MCF 10A (cell line): ENCODE measurements at regions of chr7 and their contacts with region 1.

Region 1: GRCh38 chr7:151759591-151760042 is 117.3 kb downstream of the PRKAG2 start:
- DNase-seq: peak; percentile 78
- H3K4me3 Mint-ChIP-seq: no peak overlapping the region
- H3K27ac Mint-ChIP-seq: no peak overlapping the region
- H3K4me1 Mint-ChIP-seq: peaks cover 21% of the 10 kb centered on the region
- H3K27me3 Mint-ChIP-seq: no peaks in the 10 kb centered on the region
- CTCF ChIP-seq: peak; percentile 83

Region 2: DNA sequence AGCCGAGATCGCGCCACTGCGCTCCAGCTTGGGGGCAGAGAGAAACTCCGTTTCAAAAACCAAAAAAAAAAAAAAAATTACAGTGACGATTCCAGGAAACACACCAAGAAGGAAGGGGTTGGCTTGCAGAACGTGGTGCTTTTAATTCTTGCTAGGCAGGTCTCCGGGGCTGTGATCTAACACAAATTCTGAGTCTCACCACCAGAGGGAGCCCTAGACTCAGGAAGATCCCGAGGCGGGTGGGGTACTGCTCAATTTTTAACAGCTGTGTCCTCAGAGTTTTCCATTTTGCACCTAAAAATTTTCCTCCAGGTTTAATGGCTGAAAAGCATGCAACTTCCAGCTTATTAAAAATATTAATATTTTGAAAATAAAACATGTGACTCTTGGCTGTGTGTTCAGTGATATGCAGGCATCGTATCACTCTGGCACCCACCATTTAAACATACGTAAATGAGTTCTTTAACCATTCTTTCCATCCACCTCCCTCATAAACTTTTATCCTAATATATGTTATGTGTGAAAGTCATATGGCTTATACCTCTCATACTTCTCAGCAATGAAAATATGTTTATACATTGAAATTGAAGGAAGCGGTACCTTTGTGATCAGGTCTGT is 444.5 kb before region 1 on chr7:
- CTCF ChIA-PET with region 1: interaction called, 3 read pairs
- POLR2A ChIA-PET with region 1: no interaction called
- intact Hi-C with region 1: loop called (anchors 1 kb)
- DNase-seq: peak; percentile 65
- H3K4me3 Mint-ChIP-seq: no peak overlapping the region
- H3K27ac Mint-ChIP-seq: no peak overlapping the region
- H3K4me1 Mint-ChIP-seq: no peaks in the 10 kb centered on the region
- H3K27me3 Mint-ChIP-seq: no peaks in the 10 kb centered on the region
- CTCF ChIP-seq: peak; percentile 72

Region 3: DNA sequence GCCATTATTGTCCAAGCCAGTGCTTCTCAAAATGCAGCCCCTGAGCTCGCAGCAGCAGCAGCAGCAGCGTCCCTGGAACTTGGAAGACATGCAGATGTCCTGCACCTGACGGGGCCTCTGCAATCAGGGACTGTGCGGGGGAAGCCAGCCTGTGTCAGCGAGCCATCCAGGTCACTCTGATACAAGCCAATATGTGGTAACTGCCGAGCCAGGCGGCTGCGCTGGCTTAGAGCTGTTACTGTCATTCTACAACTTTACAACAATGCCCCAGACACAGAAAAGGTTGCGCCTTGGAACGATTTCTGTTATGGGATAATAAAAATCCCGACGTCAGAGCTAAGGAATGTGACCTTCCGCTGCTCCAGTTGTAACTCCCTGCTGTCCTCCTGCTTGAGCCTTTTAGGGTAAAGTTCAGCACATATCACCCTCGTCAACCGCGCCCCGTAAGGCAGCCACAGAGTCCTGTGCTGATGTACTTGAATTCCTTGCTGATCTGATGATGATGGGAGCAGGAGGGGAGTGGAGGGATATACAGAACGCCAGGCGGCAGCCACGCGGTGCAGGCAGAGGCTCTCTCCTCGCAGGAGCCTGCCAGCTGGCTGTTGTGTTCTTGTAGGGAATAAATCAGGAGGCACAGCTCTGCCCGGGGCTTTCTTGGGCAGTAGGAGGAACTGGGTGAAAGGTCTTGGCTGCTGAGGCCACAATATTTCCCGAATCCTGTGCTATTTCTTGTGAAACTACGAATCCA is 299.7 kb before region 1 on chr7:
- CTCF ChIA-PET with region 1: interaction called, 18 read pairs
- POLR2A ChIA-PET with region 1: no interaction called
- intact Hi-C with region 1: loop called (anchors 1 kb)
- DNase-seq: peak; percentile 85
- H3K4me3 Mint-ChIP-seq: peak overlapping the region; percentile 65
- H3K27ac Mint-ChIP-seq: peak overlapping the region; percentile 76
- H3K4me1 Mint-ChIP-seq: peaks cover 16% of the 10 kb centered on the region
- H3K27me3 Mint-ChIP-seq: no peaks in the 10 kb centered on the region
- CTCF ChIP-seq: peak; percentile 24

Region 4: GRCh38 chr7:151570366-151570915 is 189.2 kb before region 1 on chr7:
- CTCF ChIA-PET with region 1: interaction called, 67 read pairs
- POLR2A ChIA-PET with region 1: interaction called, 3 read pairs
- intact Hi-C with region 1: loop called (anchors 1 kb)
- DNase-seq: peak; percentile 24
- H3K4me3 Mint-ChIP-seq: no peak overlapping the region
- H3K27ac Mint-ChIP-seq: no peak overlapping the region
- H3K4me1 Mint-ChIP-seq: no peaks in the 10 kb centered on the region
- H3K27me3 Mint-ChIP-seq: no peaks in the 10 kb centered on the region
- CTCF ChIP-seq: peak; percentile 52

Region 5: GRCh38 chr7:151585744-151586393 is 173.7 kb before region 1 on chr7:
- CTCF ChIA-PET with region 1: interaction called, 11 read pairs
- POLR2A ChIA-PET with region 1: no interaction called
- intact Hi-C with region 1: no loop called
- DNase-seq: peak; percentile 19
- H3K4me3 Mint-ChIP-seq: no peak overlapping the region
- H3K27ac Mint-ChIP-seq: peak overlapping the region; percentile 28
- H3K4me1 Mint-ChIP-seq: peaks cover 9% of the 10 kb centered on the region
- H3K27me3 Mint-ChIP-seq: no peaks in the 10 kb centered on the region
- CTCF ChIP-seq: no peak

Region 6: DNA sequence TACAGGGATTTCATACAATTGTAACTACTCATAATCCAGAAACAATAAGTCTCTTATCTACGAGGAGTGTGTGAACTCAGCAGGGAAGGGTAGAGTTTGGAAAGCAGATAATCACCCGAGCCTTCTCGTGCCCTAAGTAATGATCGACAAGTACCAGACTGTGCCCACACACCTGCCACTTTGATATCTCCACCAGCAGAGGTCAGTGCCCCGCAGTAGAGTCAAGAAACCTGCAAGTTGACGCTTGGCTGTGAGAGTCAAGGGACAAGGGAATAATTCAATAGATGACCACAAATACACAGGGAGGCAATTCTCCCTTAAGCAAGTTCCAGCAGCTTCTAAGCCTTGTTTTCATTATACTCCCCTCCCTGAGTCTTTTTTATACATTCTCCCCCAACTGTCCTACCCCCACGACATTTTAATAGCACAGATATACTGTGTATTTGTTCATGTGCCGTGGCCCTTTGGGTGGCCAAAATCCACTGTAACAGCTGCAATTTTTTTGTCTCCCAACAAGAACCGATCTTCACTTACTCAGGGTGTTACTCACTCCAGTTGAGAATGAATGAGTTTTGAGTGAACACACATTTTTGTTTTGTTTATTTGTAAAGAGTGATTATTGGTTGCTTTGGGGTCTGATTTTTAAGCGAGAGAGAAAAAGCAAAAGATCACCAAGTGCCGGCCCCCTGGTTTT is 133.0 kb before region 1 on chr7:
- CTCF ChIA-PET with region 1: interaction called, 22 read pairs
- POLR2A ChIA-PET with region 1: interaction called, 25 read pairs
- intact Hi-C with region 1: loop called (anchors 1 kb)
- DNase-seq: peak; percentile 70
- H3K4me3 Mint-ChIP-seq: no peak overlapping the region
- H3K27ac Mint-ChIP-seq: no peak overlapping the region
- H3K4me1 Mint-ChIP-seq: peaks cover 62% of the 10 kb centered on the region
- H3K27me3 Mint-ChIP-seq: no peaks in the 10 kb centered on the region
- CTCF ChIP-seq: peak; percentile 52

Region 7: DNA sequence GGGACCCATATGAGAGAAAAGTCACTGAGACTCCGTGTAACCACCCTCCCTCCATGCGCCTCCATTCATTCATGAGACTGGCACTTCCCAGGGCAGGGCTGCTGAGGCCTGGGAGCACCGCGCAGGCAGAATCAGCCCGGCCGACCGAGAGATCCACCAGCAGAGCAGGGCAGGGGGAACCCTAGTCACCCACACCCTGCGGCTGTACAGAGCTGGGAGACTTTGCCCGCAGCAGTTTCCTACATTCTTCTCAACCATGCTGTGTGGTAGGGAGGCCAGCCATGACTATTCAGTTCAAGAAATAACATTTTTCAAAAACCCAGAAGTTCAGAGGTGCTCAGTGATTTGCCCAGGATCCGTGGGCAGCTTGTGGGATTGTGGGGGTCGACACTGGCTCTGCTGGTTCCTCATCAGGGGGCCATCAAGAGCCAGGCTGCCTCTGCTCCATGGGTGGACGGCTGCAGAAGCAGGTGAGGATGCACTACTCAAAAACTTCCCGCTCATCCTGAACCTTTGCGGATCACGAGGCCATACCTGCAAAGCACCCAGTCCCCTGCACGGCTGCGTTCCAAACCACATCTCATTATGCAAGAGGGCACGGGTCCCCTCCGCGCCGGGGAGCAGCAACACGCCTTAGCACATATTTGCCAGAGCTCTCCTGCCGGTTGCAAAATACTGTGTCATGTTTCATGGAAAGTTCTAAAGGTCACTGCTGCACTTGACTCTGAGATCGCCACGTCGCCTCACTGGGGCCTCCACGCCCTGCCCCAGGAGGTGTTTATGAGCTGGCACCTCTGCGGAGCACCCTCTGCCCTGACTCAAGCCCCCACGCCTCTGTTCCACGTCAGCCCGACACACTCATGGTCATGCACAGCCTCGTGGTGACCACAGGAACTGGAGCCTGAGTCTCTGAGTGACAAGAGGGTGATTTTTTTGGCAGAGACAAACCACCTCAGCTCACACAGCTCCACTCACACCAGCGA is 14.7 kb before region 1 on chr7:
- CTCF ChIA-PET with region 1: interaction called, 19 read pairs
- POLR2A ChIA-PET with region 1: interaction called, 5 read pairs
- intact Hi-C with region 1: no loop called
- DNase-seq: peak; percentile 96
- H3K4me3 Mint-ChIP-seq: peak overlapping the region; percentile 63
- H3K27ac Mint-ChIP-seq: peak overlapping the region; percentile 91
- H3K4me1 Mint-ChIP-seq: peaks cover 19% of the 10 kb centered on the region
- H3K27me3 Mint-ChIP-seq: no peaks in the 10 kb centered on the region
- CTCF ChIP-seq: peak; percentile 47